ENCODE measurements at regions of chr19 and their contacts with region 1.

Region 1: DNA sequence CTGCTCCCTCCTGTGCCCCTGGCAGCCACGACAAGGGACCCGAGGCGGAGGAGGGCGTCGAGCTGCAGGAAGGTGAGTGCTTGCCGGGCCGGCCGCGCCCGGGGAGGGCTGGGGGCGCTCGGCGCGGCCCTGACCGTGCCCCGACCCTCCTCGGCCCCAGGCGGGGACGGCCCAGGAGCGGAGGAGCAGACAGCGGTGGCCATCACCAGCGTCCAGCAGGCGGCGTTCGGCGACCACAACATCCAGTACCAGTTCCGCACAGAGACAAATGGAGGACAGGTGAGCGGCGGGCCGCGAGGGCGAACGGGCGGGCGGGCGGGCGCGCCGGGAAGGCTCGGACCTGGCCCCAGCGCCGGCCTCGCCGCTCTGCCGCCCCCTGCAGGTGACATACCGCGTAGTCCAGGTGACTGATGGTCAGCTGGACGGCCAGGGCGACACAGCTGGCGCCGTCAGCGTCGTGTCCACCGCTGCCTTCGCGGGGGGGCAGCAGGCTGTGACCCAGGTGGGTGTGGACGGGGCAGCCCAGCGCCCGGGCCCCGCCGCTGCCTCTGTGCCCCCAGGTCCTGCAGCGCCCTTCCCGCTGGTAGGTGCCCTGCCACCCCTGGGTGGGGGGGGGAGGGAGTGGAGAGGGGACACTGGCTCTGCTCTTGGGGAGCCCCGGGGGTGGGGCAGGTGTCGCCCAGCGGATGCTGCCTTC is 807 bp downstream of the USF2 start:
- DNase-seq: peak; percentile 78
- H3K4me3 ChIP-seq: peak overlapping the region; percentile 67 to 81
- H3K27ac ChIP-seq: peak overlapping the region; percentile 94 to 96
- H3K4me1 ChIP-seq: peaks cover 9% of the 10 kb centered on the region
- H3K27me3 ChIP-seq: no peaks in the 10 kb centered on the region
- CTCF ChIP-seq: peak; percentile 60 to 91 (median 79)
- POLR2A ChIP-seq: no peak

Region 2: DNA sequence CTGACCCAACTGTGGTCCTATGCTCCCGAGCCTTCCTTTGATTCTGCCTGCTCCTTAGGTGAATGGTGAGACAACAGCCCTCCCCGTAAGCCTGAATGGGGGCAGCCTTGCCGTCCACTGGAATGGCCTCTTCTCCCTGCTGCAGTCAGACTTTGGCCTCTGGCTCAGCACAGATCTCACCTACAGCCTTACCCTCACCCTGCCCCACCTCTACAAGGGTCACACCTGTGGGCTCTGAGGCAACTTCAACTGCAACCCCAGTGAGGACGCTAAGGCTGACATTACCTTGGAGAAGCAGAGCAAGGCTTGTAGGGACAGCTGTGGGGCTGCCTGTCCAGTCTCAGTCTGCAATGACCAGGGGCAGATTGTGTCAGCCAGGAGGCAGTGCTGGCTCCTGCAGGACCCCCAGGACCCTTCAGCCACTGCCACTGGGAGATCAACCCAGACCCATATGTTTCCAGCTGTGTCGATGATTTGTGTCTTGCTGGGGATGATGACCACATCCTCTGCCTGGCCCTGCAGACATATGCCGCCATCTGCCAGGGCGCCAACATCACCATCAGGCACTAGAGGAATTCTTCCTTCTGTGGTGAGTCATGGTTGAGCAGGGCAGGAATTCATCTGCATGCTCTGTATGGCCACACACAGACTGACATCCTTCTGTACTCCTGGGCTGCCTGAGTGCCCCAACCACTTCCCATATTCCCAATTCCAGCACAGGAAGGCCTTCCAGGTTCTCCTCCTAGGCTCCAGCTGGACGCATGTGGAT is 181.2 kb before region 1 on chr19:
- intact Hi-C with region 1: no loop called
- DNase-seq: no peak
- H3K4me3 ChIP-seq: no peak overlapping the region
- H3K27ac ChIP-seq: no peak overlapping the region
- H3K4me1 ChIP-seq: no peaks in the 10 kb centered on the region
- H3K27me3 ChIP-seq: no peaks in the 10 kb centered on the region
- CTCF ChIP-seq: no peak
- POLR2A ChIP-seq: no peak

Region 3: DNA sequence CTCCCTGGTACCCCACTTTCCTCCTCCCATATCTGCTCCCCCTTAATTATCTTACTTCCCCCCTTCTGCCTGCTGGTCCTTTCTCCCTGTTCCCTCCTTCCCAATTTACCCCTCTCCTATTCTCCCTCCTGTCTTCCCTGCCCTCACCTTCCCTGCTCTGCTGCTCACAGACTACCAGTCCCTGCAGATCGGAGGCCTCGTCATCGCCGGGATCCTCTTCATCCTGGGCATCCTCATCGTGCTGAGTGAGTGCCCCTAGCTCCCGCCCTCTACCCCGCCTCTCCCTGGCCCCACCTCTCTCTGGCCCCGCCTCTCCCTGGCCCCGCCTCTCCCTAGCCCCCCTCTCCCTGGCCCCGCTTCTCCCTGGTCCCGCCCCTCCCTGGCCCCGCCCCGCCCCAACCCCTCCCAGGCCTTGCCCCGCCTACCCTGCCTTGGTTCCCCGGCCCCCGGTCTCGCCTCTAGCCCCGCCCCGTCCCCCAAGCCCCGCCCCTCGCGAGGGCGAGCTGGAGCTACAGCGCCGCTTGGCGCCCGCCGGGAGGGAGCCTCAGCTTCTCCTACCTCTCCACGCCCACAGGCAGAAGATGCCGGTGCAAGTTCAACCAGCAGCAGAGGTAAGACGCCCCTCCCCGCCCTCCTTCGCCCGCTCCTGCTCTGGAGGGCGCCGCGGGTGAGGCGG is 128.5 kb before region 1 on chr19:
- intact Hi-C with region 1: loop called (anchors 5 kb)
- DNase-seq: peak; percentile 89
- H3K4me3 ChIP-seq: no peak overlapping the region
- H3K27ac ChIP-seq: peak overlapping the region; percentile 64 to 71
- H3K4me1 ChIP-seq: peaks cover 15% of the 10 kb centered on the region
- H3K27me3 ChIP-seq: no peaks in the 10 kb centered on the region
- CTCF ChIP-seq: peak in 3 of 4 experiments; percentile 52 to 62 (median 56)
- POLR2A ChIP-seq: peak; percentile 31

Region 4: GRCh38 chr19:35204799-35205732 is 64.5 kb before region 1 on chr19:
- intact Hi-C with region 1: no loop called
- DNase-seq: no peak
- H3K4me3 ChIP-seq: no peak overlapping the region
- H3K27ac ChIP-seq: no peak overlapping the region
- H3K4me1 ChIP-seq: no peaks in the 10 kb centered on the region
- H3K27me3 ChIP-seq: no peaks in the 10 kb centered on the region
- CTCF ChIP-seq: no peak
- POLR2A ChIP-seq: no peak

Region 5: DNA sequence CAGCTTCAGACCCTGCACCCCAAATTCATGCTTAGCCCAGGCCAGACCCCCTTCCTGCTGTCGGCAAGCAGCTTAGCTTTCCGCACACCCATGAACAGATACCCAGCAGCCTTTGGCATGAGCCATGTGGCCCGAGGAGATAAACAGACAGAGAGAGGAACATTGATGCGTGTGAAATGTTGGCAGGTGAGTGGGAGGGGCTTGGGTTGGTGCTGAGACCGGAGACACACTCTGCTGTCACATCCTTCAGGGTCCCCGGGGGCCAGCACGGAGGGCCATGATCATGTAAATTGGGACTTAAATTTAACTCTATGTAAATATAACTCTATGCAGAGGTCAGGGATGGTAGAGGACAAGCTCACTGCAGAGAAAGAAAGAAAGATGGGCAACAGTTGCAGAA is 60.9 kb after region 1 on chr19:
- intact Hi-C with region 1: no loop called
- DNase-seq: no peak
- H3K4me3 ChIP-seq: no peak overlapping the region
- H3K27ac ChIP-seq: no peak overlapping the region
- H3K4me1 ChIP-seq: no peaks in the 10 kb centered on the region
- H3K27me3 ChIP-seq: peaks cover 5% of the 10 kb centered on the region
- CTCF ChIP-seq: no peak
- POLR2A ChIP-seq: no peak

Region 6: GRCh38 chr19:35495107-35496064 is 225.8 kb after region 1 on chr19:
- intact Hi-C with region 1: loop called (anchors 10 kb)
- DNase-seq: peak; percentile 32
- H3K4me3 ChIP-seq: no peak overlapping the region
- H3K27ac ChIP-seq: no peak overlapping the region
- H3K4me1 ChIP-seq: no peaks in the 10 kb centered on the region
- H3K27me3 ChIP-seq: no peaks in the 10 kb centered on the region
- CTCF ChIP-seq: peak; percentile 75 to 91 (median 83)
- POLR2A ChIP-seq: no peak

Measured in prostate gland (tissue), 2 donors.